MCF 10A (cell line): ENCODE measurements at regions of chr13 and their contacts with region 1.

Region 1: GRCh38 chr13:79679334-79679733 is 198.4 kb downstream of the NDFIP2 start:
- DNase-seq: peak; percentile 81
- H3K4me3 Mint-ChIP-seq: no peak overlapping the region
- H3K27ac Mint-ChIP-seq: no peak overlapping the region
- H3K4me1 Mint-ChIP-seq: peaks cover 14% of the 10 kb centered on the region
- H3K27me3 Mint-ChIP-seq: no peaks in the 10 kb centered on the region
- CTCF ChIP-seq: peak; percentile 81

Region 2: GRCh38 chr13:79349011-79349410 is 330.3 kb before region 1 on chr13:
- CTCF ChIA-PET with region 1: no interaction called
- POLR2A ChIA-PET with region 1: no interaction called
- intact Hi-C with region 1: no loop called
- DNase-seq: no peak
- H3K4me3 Mint-ChIP-seq: no peak overlapping the region
- H3K27ac Mint-ChIP-seq: no peak overlapping the region
- H3K4me1 Mint-ChIP-seq: no peaks in the 10 kb centered on the region
- H3K27me3 Mint-ChIP-seq: no peaks in the 10 kb centered on the region
- CTCF ChIP-seq: no peak

Region 3: DNA sequence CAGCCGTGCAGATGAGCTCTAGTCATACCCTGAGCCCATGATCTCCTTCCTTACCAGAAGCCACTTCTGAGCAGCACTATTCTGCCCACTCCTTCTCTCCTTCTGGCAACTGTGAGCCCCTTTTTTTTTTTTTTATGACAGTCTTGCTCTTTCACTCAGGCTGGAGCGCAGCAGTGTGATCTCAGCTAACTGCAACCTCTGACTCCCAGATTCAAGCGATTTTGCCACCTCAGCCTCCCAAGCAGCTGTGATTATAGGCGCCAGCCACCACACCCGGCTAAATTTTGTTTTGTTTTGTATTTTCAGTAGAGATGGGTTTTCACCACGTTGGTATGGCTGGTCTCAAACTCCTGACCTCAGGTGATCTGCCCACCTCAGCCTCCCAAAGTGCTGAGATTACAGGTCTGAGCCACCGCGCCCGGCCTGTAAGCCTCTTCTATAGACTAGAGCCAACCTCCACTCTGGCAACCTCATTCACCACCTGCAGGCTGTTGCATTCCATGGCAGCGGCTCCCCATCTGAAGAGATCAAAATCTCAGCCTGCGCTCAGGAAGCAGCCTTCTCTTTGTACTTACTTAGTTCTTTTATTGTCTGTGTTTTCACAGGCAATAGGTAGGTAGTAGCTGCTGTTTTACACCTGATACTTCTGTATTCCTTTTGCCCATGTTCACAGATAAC is 233.2 kb before region 1 on chr13:
- CTCF ChIA-PET with region 1: no interaction called
- POLR2A ChIA-PET with region 1: no interaction called
- intact Hi-C with region 1: no loop called
- DNase-seq: no peak
- H3K4me3 Mint-ChIP-seq: no peak overlapping the region
- H3K27ac Mint-ChIP-seq: no peak overlapping the region
- H3K4me1 Mint-ChIP-seq: no peaks in the 10 kb centered on the region
- H3K27me3 Mint-ChIP-seq: no peaks in the 10 kb centered on the region
- CTCF ChIP-seq: no peak

Region 4: DNA sequence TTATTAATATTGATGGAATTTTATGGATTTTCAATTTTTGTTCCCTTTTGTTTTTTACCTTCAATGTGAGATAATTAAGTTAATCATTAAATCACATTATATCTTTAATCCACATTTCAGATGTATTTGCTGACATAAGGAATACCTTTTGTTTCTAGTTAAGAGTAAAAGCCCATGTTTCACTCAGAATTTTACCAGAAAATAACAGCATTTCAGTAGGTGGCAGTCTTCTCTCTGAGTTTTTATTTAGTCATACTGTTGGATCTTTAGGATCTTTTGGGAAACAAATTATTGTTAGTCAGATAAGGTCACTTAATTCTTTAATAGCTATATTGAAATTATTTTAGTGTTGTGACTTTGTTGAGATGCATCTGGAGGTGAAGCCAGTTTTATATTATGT is 130.4 kb before region 1 on chr13:
- CTCF ChIA-PET with region 1: interaction called, 6 read pairs
- POLR2A ChIA-PET with region 1: no interaction called
- intact Hi-C with region 1: loop called (anchors 5 kb)
- DNase-seq: peak; percentile 45
- H3K4me3 Mint-ChIP-seq: no peak overlapping the region
- H3K27ac Mint-ChIP-seq: peak overlapping the region; percentile 79
- H3K4me1 Mint-ChIP-seq: peaks cover 7% of the 10 kb centered on the region
- H3K27me3 Mint-ChIP-seq: no peaks in the 10 kb centered on the region
- CTCF ChIP-seq: peak; percentile 34